MCF 10A (cell line): ENCODE measurements at regions of chr17 and their contacts with region 1.

Region 1: GRCh38 chr17:22654447-22654846 is 962.1 kb downstream of the KCNJ18 start:
- DNase-seq: no peak
- H3K4me3 Mint-ChIP-seq: no peak overlapping the region
- H3K27ac Mint-ChIP-seq: no peak overlapping the region
- H3K4me1 Mint-ChIP-seq: no peaks in the 10 kb centered on the region
- H3K27me3 Mint-ChIP-seq: no peaks in the 10 kb centered on the region
- CTCF ChIP-seq: no peak

Region 2: DNA sequence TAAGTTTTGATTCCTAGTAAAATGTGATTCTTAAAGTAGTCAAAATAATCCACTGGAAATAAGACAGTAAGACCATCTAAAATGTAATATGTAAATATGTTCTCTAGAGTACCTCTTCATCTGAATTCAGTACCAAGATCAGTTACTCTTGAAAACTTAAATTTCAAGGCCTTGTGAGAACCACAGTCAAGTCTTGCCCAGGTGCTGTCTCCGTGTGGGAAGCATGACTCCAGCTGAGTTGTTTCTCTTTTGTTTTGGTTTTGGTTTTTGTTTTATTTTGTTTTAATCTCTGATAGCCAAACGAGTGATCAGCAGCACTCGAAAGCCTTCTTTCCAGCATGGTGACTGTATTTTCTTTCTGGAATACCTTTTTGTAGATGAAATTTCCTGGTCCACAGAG is 55.1 kb before region 1 on chr17:
- CTCF ChIA-PET with region 1: no interaction called
- POLR2A ChIA-PET with region 1: no interaction called
- intact Hi-C with region 1: loop called (anchors 10 kb)
- DNase-seq: no peak
- H3K4me3 Mint-ChIP-seq: no peak overlapping the region
- H3K27ac Mint-ChIP-seq: no peak overlapping the region
- H3K4me1 Mint-ChIP-seq: no peaks in the 10 kb centered on the region
- H3K27me3 Mint-ChIP-seq: no peaks in the 10 kb centered on the region
- CTCF ChIP-seq: no peak